ENCODE measurements at regions of chr17 and their contacts with region 1.

Region 1: DNA sequence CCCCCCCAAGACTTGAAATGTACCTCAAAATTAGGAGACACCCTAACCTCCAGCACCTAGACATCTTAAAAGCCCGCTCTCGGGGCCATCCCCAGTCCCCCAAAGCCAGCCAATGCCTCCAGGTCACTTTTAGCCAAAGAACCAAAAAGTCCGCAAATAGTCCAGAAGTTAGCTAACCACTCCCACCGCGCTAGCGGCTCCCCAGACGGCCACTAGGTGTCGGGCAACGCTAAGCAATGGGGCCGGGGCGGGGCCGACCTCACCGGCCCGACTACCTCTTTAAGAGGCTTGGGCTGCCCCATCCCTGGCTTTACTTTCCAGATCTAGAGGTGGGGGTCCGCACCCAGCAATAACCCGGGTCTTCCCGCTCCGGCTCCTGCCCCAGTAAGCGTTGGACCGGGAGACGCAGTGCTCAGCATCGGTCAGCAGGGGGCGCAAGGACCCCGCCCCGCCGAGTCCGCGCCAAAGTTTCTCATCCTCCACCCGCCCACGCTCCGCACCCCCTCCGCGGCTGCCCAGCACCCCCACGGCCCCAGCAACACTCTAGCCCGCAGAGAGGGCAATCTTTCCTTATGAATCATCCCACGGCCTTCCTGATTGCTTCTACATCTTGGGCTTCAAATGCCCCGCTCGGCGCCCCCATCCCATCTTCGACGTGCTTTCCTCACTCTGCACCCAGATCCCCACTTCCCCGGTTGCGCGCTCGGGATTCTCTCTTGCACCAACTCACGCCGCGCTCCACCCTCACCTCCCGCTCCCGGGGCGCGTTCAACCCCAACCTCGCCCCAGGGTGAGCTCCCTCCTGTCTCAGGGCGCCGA is 765 bp downstream of the COL1A1 start:
- DNase-seq: peak; percentile 66 to 84 (median 78)
- ATAC-seq: peak; percentile 80
- H3K4me3 ChIP-seq: peak overlapping the region; percentile 61
- H3K4me3 Mint-ChIP-seq: peak overlapping the region; percentile 70 to 87 (median 76)
- H3K27ac ChIP-seq: peak overlapping the region; percentile 26
- H3K27ac Mint-ChIP-seq: peak overlapping the region in 7 of 9 donors; percentile 47 to 92 (median 87)
- H3K4me1 ChIP-seq: peaks cover 12% of the 10 kb centered on the region in 2 donors
- H3K4me1 Mint-ChIP-seq: peaks cover 6 to 27% (median 25%) of the 10 kb centered on the region in 7 donors
- H3K27me3 ChIP-seq: peaks cover 5 to 13% of the 10 kb centered on the region in 2 donors
- H3K27me3 Mint-ChIP-seq: peaks cover 43 to 70% (median 49%) of the 10 kb centered on the region in 5 donors

Region 2: DNA sequence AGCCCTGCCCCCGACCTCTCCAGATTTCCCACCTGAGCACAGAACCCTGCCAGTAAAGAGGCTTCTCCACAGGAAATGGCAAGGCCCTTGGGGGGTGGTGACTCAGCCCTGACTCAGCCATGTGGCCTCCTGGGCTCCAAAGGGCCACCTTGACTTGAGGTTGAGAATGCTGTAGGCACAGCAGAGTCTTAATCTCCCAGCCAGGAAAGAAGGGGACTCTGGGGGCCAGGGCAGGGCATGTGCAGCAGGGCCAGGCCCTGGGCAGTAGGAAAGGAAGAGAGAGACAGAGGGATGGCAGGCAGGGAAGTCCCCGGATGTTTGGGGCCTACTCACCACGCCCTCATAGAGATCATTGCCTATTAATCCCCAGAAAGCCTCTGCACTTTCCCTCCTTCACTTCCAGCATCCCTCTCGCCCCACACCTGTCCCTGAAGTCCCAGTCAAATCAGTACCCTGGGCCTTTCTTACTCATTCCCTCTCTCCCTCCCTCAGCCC is 149.5 kb before region 1 on chr17:
- CTCF ChIA-PET with region 1: no interaction called
- POLR2A ChIA-PET with region 1: no interaction called
- intact Hi-C with region 1: no loop called
- DNase-seq: peak in 1 of 9 donors; percentile 70
- ATAC-seq: no peak
- H3K4me3 ChIP-seq: no peak overlapping the region
- H3K4me3 Mint-ChIP-seq: peak overlapping the region in 1 of 10 donors; percentile 49
- H3K27ac ChIP-seq: no peak overlapping the region
- H3K27ac Mint-ChIP-seq: peak overlapping the region in 2 of 9 donors; percentile 59 to 88
- H3K4me1 ChIP-seq: no peaks in the 10 kb centered on the region
- H3K4me1 Mint-ChIP-seq: peaks cover 0 to 49% (median 5%) of the 10 kb centered on the region in 7 donors
- H3K27me3 ChIP-seq: no peaks in the 10 kb centered on the region
- H3K27me3 Mint-ChIP-seq: peaks cover 0 to 7% (median 6%) of the 10 kb centered on the region in 5 donors

Region 3: GRCh38 chr17:50114849-50115357 is 85.8 kb before region 1 on chr17:
- CTCF ChIA-PET with region 1: no interaction called
- POLR2A ChIA-PET with region 1: no interaction called
- intact Hi-C with region 1: loop called (anchors 1 to 2 kb)
- DNase-seq: peak in 6 of 9 donors; percentile 35 to 47 (median 41)
- ATAC-seq: peak; percentile 48
- H3K4me3 ChIP-seq: no peak overlapping the region
- H3K4me3 Mint-ChIP-seq: peak overlapping the region in 2 of 10 donors; percentile 5 to 32
- H3K27ac ChIP-seq: no peak overlapping the region
- H3K27ac Mint-ChIP-seq: peak overlapping the region in 2 of 9 donors; percentile 61 to 68
- H3K4me1 ChIP-seq: peaks cover 0 to 4% of the 10 kb centered on the region in 2 donors
- H3K4me1 Mint-ChIP-seq: peaks cover 7 to 18% (median 12%) of the 10 kb centered on the region in 7 donors
- H3K27me3 ChIP-seq: peaks cover 4 to 9% of the 10 kb centered on the region in 2 donors
- H3K27me3 Mint-ChIP-seq: peaks cover 14 to 44% (median 26%) of the 10 kb centered on the region in 5 donors

Region 4: GRCh38 chr17:50169121-50169764 is 31.4 kb before region 1 on chr17:
- CTCF ChIA-PET with region 1: interaction called, 8 read pairs
- POLR2A ChIA-PET with region 1: no interaction called
- intact Hi-C with region 1: loop called (anchors 1 kb)
- DNase-seq: peak; percentile 50 to 78 (median 71)
- ATAC-seq: peak; percentile 93
- H3K4me3 ChIP-seq: peak overlapping the region; percentile 52
- H3K4me3 Mint-ChIP-seq: peak overlapping the region; percentile 42 to 78 (median 62)
- H3K27ac ChIP-seq: peak overlapping the region; percentile 38
- H3K27ac Mint-ChIP-seq: peak overlapping the region; percentile 24 to 93 (median 79)
- H3K4me1 ChIP-seq: peaks cover 9 to 10% of the 10 kb centered on the region in 2 donors
- H3K4me1 Mint-ChIP-seq: peaks cover 11 to 14% (median 12%) of the 10 kb centered on the region in 7 donors
- H3K27me3 ChIP-seq: no peaks in the 10 kb centered on the region
- H3K27me3 Mint-ChIP-seq: no peaks in the 10 kb centered on the region

Region 5: DNA sequence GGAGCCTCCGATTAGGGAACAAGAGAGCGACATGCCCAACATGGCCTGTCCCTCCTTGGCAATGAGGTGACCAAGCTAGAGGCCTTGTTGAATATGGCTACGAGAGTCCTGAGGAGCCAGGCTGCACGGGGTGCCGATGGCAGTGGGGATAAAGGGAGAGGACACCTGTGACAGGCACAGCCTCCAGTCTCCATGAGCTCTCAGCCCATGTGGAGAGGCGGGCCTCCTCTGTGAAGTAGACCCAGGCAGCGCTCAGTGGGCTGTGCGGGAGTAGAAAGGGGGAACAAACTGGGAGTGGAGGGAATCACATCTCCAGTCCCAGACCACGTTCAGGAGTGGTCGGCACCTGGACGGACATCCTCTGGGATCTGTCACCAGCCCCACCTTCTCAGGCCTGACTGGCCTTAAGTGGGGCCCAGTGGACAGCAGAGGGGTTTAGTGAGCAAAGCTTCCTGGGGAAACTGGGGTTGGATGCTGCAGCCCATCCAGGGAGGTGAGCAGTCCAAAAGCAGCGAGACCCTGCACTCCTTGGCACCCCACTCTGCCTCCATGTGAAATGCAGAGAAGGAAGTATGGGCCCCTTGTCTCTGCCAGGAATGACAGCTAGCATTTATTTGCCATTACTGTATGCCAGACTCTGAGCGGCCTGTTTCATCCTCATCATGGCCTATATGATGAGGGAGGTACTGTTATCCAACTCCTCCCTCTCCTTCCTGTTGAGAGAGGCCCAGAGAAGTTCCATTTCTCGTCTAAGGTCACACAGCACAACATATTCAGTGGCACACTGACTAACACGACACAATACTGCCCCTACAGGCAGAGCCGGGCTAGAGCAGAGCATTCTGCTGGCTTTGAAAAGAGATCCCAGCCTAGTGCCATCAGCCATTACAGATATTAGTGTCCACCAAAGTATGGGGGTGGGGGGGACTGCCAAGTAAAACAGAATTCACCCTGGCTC is 69.1 kb after region 1 on chr17:
- CTCF ChIA-PET with region 1: interaction called, 60 read pairs
- POLR2A ChIA-PET with region 1: interaction called, 5 read pairs
- intact Hi-C with region 1: loop called (anchors 1 kb)
- DNase-seq: peak in 8 of 9 donors; percentile 12 to 58 (median 35)
- ATAC-seq: peak; percentile 85
- H3K4me3 ChIP-seq: no peak overlapping the region
- H3K4me3 Mint-ChIP-seq: no peak overlapping the region
- H3K27ac ChIP-seq: no peak overlapping the region
- H3K27ac Mint-ChIP-seq: no peak overlapping the region
- H3K4me1 ChIP-seq: no peaks in the 10 kb centered on the region
- H3K4me1 Mint-ChIP-seq: peaks cover 5 to 14% (median 7%) of the 10 kb centered on the region in 7 donors
- H3K27me3 ChIP-seq: peaks cover 0 to 3% of the 10 kb centered on the region in 2 donors
- H3K27me3 Mint-ChIP-seq: peaks cover 13 to 22% (median 17%) of the 10 kb centered on the region in 5 donors

Region 6: GRCh38 chr17:50397111-50397918 is 196.6 kb after region 1 on chr17 and contains the start of gene LRRC59:
- CTCF ChIA-PET with region 1: no interaction called
- POLR2A ChIA-PET with region 1: no interaction called
- intact Hi-C with region 1: loop called in 1 of 2 experiments (anchors 1 kb)
- DNase-seq: peak; percentile 86 to 99 (median 93)
- ATAC-seq: peak; percentile 100
- H3K4me3 ChIP-seq: peak within 1 kb of the TSS; percentile 69
- H3K4me3 Mint-ChIP-seq: peak within 1 kb of the TSS; percentile 78 to 99 (median 92)
- H3K27ac ChIP-seq: peak within 1 kb of the TSS; percentile 93
- H3K27ac Mint-ChIP-seq: peak within 1 kb of the TSS; percentile 83 to 96 (median 93)
- H3K4me1 ChIP-seq: peaks cover 15 to 18% of the 10 kb centered on the region in 2 donors
- H3K4me1 Mint-ChIP-seq: peaks cover 21 to 47% (median 34%) of the 10 kb centered on the region in 7 donors
- H3K27me3 ChIP-seq: no peaks in the 10 kb centered on the region
- H3K27me3 Mint-ChIP-seq: no peaks in the 10 kb centered on the region
- total RNA-seq, gene LRRC59: 27.6 to 67.1 (median 42.4) TPM

Measured in naive thymus-derived CD4-positive, alpha-beta T cell (primary cell).